CD4-positive, alpha-beta memory T cell (primary cell): ENCODE measurements at regions of chr3 and their contacts with region 1.

Region 1: GRCh38 chr3:105747060-105747541 is 121.7 kb downstream of the CBLB start:
- DNase-seq: peak in 3 of 5 donors; percentile 30 to 54 (median 37)
- H3K4me3 ChIP-seq: no peak overlapping the region
- H3K4me3 Mint-ChIP-seq: peak overlapping the region; percentile 8 to 83 (median 66)
- H3K27ac ChIP-seq: no peak overlapping the region
- H3K27ac Mint-ChIP-seq: peak overlapping the region; percentile 48 to 91 (median 76)
- H3K4me1 ChIP-seq: peaks cover 71% of the 10 kb centered on the region
- H3K4me1 Mint-ChIP-seq: peaks cover 45 to 71% (median 55%) of the 10 kb centered on the region in 4 donors
- H3K27me3 ChIP-seq: no peaks in the 10 kb centered on the region
- H3K27me3 Mint-ChIP-seq: no peaks in the 10 kb centered on the region

Region 2: DNA sequence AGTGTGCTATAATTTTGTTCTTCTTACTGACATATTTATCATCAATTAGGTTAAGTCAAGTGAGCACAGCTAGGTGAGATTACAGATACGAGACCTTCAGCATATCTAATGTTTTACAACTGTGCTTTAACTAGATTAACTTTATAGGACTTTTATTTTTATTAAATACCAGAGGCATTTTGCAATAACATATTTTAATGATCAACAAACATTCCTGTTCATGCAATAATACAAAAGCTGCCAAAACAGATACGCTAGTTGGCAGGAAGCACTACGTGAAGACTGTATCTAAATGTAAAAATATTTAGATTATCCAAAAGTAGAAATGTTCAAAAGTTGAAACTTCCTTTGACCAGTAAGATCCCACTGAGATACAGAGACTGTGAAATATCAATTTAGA is 17.4 kb before region 1 on chr3:
- CTCF ChIA-PET with region 1: no interaction called
- POLR2A ChIA-PET with region 1: interaction called, 3 read pairs
- intact Hi-C with region 1: loop called (anchors 2 kb)
- DNase-seq: no peak
- H3K4me3 ChIP-seq: no peak overlapping the region
- H3K4me3 Mint-ChIP-seq: no peak overlapping the region
- H3K27ac ChIP-seq: no peak overlapping the region
- H3K27ac Mint-ChIP-seq: no peak overlapping the region
- H3K4me1 ChIP-seq: no peaks in the 10 kb centered on the region
- H3K4me1 Mint-ChIP-seq: peaks cover 7 to 15% (median 11%) of the 10 kb centered on the region in 4 donors
- H3K27me3 ChIP-seq: no peaks in the 10 kb centered on the region
- H3K27me3 Mint-ChIP-seq: no peaks in the 10 kb centered on the region